IMR-90 (cell line): ENCODE measurements at regions of chr3 and their contacts with region 1.

Region 1: GRCh38 chr3:155491696-155492095 is 198.2 kb upstream of the STRIT1 start:
- DNase-seq: no peak
- ATAC-seq: no peak
- H3K4me3 ChIP-seq: no peak overlapping the region
- H3K27ac ChIP-seq: no peak overlapping the region
- H3K4me1 ChIP-seq: no peaks in the 10 kb centered on the region
- H3K27me3 ChIP-seq: no peaks in the 10 kb centered on the region
- CTCF ChIP-seq: no peak
- POLR2A ChIP-seq: no peak
- RAD21 ChIP-seq: no peak

Region 2: DNA sequence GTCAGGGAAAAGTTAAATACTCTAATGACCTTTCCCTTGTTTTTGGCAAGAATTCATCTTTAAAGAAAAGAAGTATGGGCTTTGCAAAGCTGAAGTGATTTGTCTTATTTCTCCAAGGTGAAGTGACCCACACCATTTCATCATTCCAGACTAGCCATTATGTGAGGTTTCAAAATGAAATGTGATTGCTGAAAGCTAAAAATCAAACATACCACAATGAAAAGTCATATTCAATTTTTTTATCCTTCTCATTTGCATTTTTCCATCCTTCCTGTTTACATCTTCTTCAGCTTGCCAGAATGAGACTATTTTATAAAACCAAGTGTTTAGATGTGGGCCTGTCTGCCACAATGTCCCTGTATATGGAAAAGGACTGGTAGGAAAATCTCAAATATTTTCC is 55.9 kb before region 1 on chr3:
- CTCF ChIA-PET with region 1: interaction called, 4 read pairs
- POLR2A ChIA-PET with region 1: no interaction called
- dilution Hi-C with region 1: no loop called
- in situ Hi-C with region 1: no loop called
- intact Hi-C with region 1: loop called (anchors 2 kb)
- DNase-seq: no peak
- ATAC-seq: peak; percentile 32; the same call in 1 of the 2 replicates
- H3K4me3 ChIP-seq: no peak overlapping the region
- H3K27ac ChIP-seq: no peak overlapping the region
- H3K4me1 ChIP-seq: no peaks in the 10 kb centered on the region
- H3K27me3 ChIP-seq: no peaks in the 10 kb centered on the region
- CTCF ChIP-seq: no peak
- POLR2A ChIP-seq: no peak
- RAD21 ChIP-seq: no peak

Region 3: GRCh38 chr3:155535098-155535497 is 43.4 kb after region 1 on chr3:
- CTCF ChIA-PET with region 1: no interaction called
- POLR2A ChIA-PET with region 1: no interaction called
- dilution Hi-C with region 1: no loop called
- in situ Hi-C with region 1: no loop called
- intact Hi-C with region 1: loop called (anchors 1 kb)
- DNase-seq: no peak
- ATAC-seq: no peak
- H3K4me3 ChIP-seq: no peak overlapping the region
- H3K27ac ChIP-seq: no peak overlapping the region
- H3K4me1 ChIP-seq: no peaks in the 10 kb centered on the region
- H3K27me3 ChIP-seq: no peaks in the 10 kb centered on the region
- CTCF ChIP-seq: no peak
- POLR2A ChIP-seq: no peak
- RAD21 ChIP-seq: no peak

Region 4: DNA sequence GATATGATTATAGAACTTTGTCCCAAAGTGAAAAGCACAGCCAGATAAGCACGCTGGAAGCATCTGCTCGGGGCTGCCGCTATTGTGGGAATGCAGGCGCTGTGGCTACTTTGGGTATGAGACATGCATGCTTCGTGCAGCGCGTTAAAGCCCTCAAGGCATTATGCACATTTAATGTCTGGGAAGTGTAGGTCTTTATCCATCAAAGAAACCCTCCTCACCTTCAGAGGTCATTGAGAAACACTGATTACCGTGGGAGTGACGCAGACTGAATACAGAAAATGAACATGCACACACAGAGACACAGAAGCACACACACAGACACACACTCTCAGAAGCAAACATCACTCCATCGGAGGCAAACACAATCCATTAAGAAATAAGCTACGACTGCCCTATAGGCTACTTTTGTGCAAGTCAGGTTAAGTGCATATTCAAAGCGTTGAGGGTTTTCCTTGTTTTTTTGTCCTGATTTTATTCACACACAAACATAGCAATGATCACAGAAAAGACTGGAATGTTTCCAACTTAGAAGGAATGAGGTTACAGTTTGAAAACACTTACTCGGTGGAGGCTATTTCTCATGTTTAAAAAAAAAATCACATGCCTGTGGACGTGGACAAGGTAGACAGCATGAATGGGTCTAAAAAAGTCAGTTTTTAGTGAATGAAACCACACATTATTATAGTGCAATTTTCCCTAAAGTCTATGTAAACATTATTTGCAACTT is 184.7 kb after region 1 on chr3:
- CTCF ChIA-PET with region 1: no interaction called
- POLR2A ChIA-PET with region 1: no interaction called
- dilution Hi-C with region 1: no loop called
- in situ Hi-C with region 1: no loop called
- intact Hi-C with region 1: no loop called
- DNase-seq: peak; percentile 34
- ATAC-seq: peak; percentile 46; the same call in 1 of the 2 replicates
- H3K4me3 ChIP-seq: no peak overlapping the region
- H3K27ac ChIP-seq: no peak overlapping the region
- H3K4me1 ChIP-seq: no peaks in the 10 kb centered on the region
- H3K27me3 ChIP-seq: no peaks in the 10 kb centered on the region
- CTCF ChIP-seq: no peak
- POLR2A ChIP-seq: no peak
- RAD21 ChIP-seq: no peak